ENCODE measurements at regions of chrX and their contacts with region 1.

Region 1: GRCh38 chrX:110188756-110189558 is 128.9 kb downstream of the AMMECR1 start:
- DNase-seq: peak in 1 of 9 donors; percentile 4
- ATAC-seq: no peak
- H3K4me3 ChIP-seq: no peak overlapping the region
- H3K4me3 Mint-ChIP-seq: peak overlapping the region in 9 of 10 donors; percentile 3 to 42 (median 20)
- H3K27ac ChIP-seq: peak overlapping the region; percentile 14
- H3K27ac Mint-ChIP-seq: peak overlapping the region; percentile 27 to 75 (median 71)
- H3K4me1 ChIP-seq: peaks cover 4 to 7% of the 10 kb centered on the region in 2 donors
- H3K4me1 Mint-ChIP-seq: peaks cover 7 to 24% (median 15%) of the 10 kb centered on the region in 7 donors
- H3K27me3 ChIP-seq: no peaks in the 10 kb centered on the region
- H3K27me3 Mint-ChIP-seq: no peaks in the 10 kb centered on the region

Region 2: DNA sequence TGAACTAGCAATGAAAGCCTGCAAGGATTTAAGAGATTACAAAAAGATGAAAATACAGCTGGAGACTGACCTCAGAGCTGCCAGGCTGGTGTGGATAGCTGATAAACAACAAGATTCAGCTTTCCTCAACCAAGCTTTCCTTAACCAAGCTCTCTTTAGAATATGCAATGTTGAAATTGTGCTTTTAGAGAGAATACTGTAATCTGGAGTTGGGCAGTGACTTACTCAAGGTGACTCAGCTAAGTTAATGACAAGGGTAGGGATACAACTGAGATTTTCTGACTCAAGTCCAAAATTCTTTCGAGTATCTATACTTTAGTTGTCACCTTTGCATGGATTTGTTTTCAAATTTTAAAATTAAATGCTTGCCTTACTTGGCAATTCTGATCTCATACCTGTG is 31.0 kb after region 1 on chrX:
- CTCF ChIA-PET with region 1: no interaction called
- POLR2A ChIA-PET with region 1: no interaction called
- intact Hi-C with region 1: loop called in 1 of 2 experiments (anchors 5 kb)
- DNase-seq: no peak
- ATAC-seq: no peak
- H3K4me3 ChIP-seq: no peak overlapping the region
- H3K4me3 Mint-ChIP-seq: no peak overlapping the region
- H3K27ac ChIP-seq: no peak overlapping the region
- H3K27ac Mint-ChIP-seq: peak overlapping the region in 2 of 9 donors; percentile 10 to 25
- H3K4me1 ChIP-seq: peaks cover 6 to 8% of the 10 kb centered on the region in 2 donors
- H3K4me1 Mint-ChIP-seq: peaks cover 9 to 45% (median 26%) of the 10 kb centered on the region in 7 donors
- H3K27me3 ChIP-seq: no peaks in the 10 kb centered on the region
- H3K27me3 Mint-ChIP-seq: no peaks in the 10 kb centered on the region

Measured in naive thymus-derived CD4-positive, alpha-beta T cell (primary cell).